ENCODE measurements at regions of chr7 and their contacts with region 1.

Region 1: GRCh38 chr7:134724606-134725005 is 54.8 kb upstream of the CALD1 start:
- DNase-seq: peak; percentile 32
- CTCF ChIP-seq: peak; percentile 45

Region 2: DNA sequence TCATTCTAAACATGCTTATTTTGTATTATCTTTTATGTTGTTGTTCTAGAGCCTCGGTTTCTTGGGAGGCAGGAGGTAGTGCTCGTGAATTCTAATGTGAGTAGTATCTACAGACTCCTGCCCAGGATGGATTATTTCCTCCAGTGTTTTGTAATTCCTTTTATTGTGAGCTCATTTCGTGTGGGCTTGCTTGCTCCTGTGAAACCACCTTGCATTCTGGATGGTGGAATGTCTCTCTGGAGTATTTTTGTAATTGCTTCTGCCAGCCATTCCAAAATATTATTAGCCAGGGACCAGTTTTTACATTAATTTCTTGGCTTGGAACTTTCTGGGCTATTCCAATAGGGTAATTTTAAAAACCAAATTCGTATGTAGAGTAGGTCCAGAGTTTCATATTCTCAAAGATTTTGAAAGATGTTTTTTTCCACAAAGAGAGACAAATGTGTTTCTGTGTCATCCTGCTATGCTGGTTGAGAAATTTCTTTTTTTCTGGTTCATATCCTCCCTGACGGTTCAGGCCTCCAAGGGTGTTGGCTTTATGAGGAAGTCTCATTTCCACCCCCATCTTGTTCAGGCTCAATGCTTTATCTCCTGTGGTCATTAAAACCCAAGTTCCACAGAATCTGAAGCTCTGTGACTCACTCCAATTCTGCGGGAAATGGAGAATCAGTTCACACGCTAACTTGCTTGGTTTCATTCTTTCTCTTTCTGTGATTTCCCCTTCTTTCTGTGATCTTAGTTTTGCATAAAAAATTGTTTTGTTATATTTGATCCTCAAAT is 13.2 kb after region 1 on chr7:
- CTCF ChIA-PET with region 1: interaction called, 18 read pairs
- POLR2A ChIA-PET with region 1: no interaction called
- DNase-seq: no peak
- CTCF ChIP-seq: no peak

Region 3: GRCh38 chr7:134750083-134751062 is 25.8 kb after region 1 on chr7:
- CTCF ChIA-PET with region 1: interaction called, 39 read pairs
- POLR2A ChIA-PET with region 1: no interaction called
- DNase-seq: peak; percentile 68
- CTCF ChIP-seq: peak; percentile 73

Region 4: DNA sequence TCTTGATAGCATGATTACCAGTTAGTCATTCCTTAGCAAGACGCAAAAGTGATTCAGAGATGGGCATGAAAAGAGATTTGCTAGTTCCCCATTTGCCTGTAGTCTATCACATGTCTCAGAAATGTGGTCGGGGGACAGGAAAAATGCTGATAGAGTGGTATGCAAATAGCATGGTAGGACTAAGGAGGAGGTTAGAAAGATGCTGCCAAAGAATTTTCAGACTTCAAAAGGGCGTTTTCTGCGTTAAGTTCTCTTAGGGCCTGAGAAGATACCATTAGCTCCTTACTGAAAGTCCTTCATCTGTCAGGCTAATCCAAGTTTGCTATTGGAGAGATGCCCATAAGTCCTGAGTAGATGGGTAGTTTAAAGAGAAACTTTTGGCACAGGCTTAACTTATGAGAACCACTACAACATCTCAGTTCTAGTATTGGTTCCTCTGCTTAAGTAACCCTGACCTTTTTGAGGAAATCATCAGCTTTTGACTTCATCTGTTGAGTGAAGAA is 57.6 kb after region 1 on chr7:
- CTCF ChIA-PET with region 1: no interaction called
- POLR2A ChIA-PET with region 1: no interaction called
- DNase-seq: peak; percentile 21
- CTCF ChIP-seq: no peak

Region 5: DNA sequence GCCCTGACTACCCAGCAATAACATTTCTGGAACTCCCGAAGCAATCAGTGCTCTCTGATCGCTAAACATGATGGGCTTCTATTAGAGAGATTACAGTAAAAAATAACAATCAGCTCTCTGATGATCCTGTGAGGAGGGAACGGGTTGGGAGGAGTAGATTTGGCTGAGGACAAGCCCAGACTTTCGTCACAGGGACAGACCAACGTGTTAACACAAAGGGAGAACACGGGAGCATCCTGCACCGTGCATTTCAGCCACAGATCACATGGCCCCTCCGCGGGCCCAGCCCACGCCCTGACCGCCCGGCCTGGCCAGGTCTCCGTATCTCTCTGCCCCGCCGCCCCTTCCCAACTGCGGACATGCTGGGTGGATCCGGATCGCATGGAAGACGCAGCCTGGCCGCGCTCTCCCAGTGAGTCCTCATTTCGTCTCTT is 166.7 kb after region 1 on chr7:
- CTCF ChIA-PET with region 1: no interaction called
- POLR2A ChIA-PET with region 1: no interaction called
- DNase-seq: no peak
- CTCF ChIP-seq: no peak